GM12878 (cell line): ENCODE measurements at regions of chr20 and their contacts with region 1.

Region 1: DNA sequence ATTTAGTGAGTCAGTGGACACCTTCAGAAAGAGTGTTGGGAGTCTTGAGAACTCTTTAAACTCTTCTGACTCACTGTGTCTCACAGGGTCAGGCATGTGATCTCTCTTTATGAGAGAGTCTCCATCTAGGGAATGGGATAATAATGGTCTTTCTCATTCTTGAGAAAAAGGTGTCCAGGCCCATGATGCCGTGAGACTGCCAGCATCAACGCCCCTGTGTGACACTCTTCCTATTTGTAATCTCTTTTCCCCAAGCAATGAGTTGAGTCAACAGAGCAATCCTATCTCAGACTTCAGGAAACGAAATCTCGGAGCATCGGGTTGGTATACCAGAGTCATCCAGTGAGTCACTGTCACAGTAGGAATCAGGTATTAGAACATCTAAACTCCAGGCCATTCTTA is 82.3 kb upstream of the BMP2 start:
- DNase-seq: no peak
- ATAC-seq: no peak
- H3K4me3 ChIP-seq: no peak overlapping the region
- H3K27ac ChIP-seq: no peak overlapping the region
- H3K4me1 ChIP-seq: no peaks in the 10 kb centered on the region
- H3K27me3 ChIP-seq: no peaks in the 10 kb centered on the region
- CTCF ChIP-seq: no peak
- EP300 ChIP-seq: no peak
- POLR2A ChIP-seq: no peak
- RAD21 ChIP-seq: no peak

Region 2: GRCh38 chr20:6410721-6411120 is 274.5 kb before region 1 on chr20:
- CTCF ChIA-PET with region 1: no interaction called
- POLR2A ChIA-PET with region 1: no interaction called
- RAD21 ChIA-PET with region 1: no interaction called
- SMC1A ChIA-PET with region 1: no interaction called
- in situ Hi-C with region 1: no loop called
- intact Hi-C with region 1: no loop called
- DNase-seq: no peak
- ATAC-seq: no peak
- H3K4me3 ChIP-seq: no peak overlapping the region
- H3K27ac ChIP-seq: no peak overlapping the region
- H3K4me1 ChIP-seq: no peaks in the 10 kb centered on the region
- H3K27me3 ChIP-seq: no peaks in the 10 kb centered on the region
- CTCF ChIP-seq: no peak
- EP300 ChIP-seq: no peak
- POLR2A ChIP-seq: no peak
- RAD21 ChIP-seq: no peak

Region 3: DNA sequence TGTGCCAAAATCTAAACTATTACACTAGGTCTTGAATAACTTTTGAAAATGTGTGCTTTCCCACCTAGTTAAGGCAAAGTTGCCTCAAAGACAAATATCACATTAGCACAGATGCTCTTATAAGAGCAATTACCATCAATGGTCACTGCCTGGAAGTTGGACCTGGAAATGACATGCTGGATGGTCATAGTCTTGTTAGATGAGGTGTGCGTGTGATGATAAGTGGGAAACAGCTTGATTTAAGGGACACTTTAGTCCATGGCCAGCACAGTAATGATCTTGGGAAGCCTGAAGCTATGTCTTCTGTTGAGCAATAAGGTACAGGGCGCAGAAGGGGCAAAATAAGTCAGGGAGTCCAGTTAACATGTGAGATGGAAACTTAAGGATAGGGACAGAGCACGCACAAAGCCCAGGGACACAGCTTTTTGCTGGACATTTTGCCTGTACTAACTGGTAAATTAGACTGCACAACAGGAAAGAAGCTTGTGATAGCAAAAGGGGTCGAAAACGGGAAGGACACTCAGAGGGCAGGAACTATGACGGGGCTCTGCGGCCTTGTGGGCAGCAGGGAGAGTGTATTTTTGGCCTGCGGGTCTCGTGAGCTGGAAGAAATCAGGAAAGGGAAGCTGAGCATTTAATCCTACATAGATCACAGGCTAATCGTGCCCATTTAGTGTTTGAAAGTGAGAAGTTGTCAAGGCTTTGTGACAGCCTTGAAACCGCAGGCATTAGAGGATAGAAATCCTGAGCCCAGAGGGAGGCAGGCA is 15.6 kb after region 1 on chr20:
- CTCF ChIA-PET with region 1: interaction called, 10 read pairs
- POLR2A ChIA-PET with region 1: no interaction called
- RAD21 ChIA-PET with region 1: no interaction called
- SMC1A ChIA-PET with region 1: interaction called, 6 read pairs
- in situ Hi-C with region 1: no loop called
- intact Hi-C with region 1: no loop called
- DNase-seq: no peak
- ATAC-seq: peak; percentile 7; the same call in 1 of the 3 replicates
- H3K4me3 ChIP-seq: no peak overlapping the region
- H3K27ac ChIP-seq: no peak overlapping the region
- H3K4me1 ChIP-seq: no peaks in the 10 kb centered on the region
- H3K27me3 ChIP-seq: no peaks in the 10 kb centered on the region
- CTCF ChIP-seq: no peak
- EP300 ChIP-seq: no peak
- POLR2A ChIP-seq: no peak
- RAD21 ChIP-seq: no peak

Region 4: GRCh38 chr20:6718651-6719368 is 33.6 kb after region 1 on chr20:
- CTCF ChIA-PET with region 1: interaction called, 3 read pairs
- POLR2A ChIA-PET with region 1: no interaction called
- RAD21 ChIA-PET with region 1: no interaction called
- SMC1A ChIA-PET with region 1: interaction called, 12 read pairs
- in situ Hi-C with region 1: no loop called
- intact Hi-C with region 1: no loop called
- DNase-seq: no peak
- ATAC-seq: peak; percentile 63
- H3K4me3 ChIP-seq: no peak overlapping the region
- H3K27ac ChIP-seq: no peak overlapping the region
- H3K4me1 ChIP-seq: no peaks in the 10 kb centered on the region
- H3K27me3 ChIP-seq: no peaks in the 10 kb centered on the region
- CTCF ChIP-seq: no peak
- EP300 ChIP-seq: no peak
- POLR2A ChIP-seq: no peak
- RAD21 ChIP-seq: no peak